HCT116 (cell line): ENCODE measurements at regions of chr3 and their contacts with region 1.

Region 1: GRCh38 chr3:146504498-146505197 is 35.3 kb upstream of the PLSCR2 start:
- DNase-seq: peak; percentile 33
- ATAC-seq: no peak
- H3K4me3 ChIP-seq: no peak overlapping the region
- H3K27ac ChIP-seq: peak overlapping the region; percentile 68; the same call in 1 of the 2 replicates
- H3K4me1 ChIP-seq: peaks cover 29 to 56% of the 10 kb centered on the region in 2 experiments
- H3K27me3 ChIP-seq: no peaks in the 10 kb centered on the region
- CTCF ChIP-seq: no peak
- POLR2A ChIP-seq: no peak
- RAD21 ChIP-seq: no peak

Region 2: DNA sequence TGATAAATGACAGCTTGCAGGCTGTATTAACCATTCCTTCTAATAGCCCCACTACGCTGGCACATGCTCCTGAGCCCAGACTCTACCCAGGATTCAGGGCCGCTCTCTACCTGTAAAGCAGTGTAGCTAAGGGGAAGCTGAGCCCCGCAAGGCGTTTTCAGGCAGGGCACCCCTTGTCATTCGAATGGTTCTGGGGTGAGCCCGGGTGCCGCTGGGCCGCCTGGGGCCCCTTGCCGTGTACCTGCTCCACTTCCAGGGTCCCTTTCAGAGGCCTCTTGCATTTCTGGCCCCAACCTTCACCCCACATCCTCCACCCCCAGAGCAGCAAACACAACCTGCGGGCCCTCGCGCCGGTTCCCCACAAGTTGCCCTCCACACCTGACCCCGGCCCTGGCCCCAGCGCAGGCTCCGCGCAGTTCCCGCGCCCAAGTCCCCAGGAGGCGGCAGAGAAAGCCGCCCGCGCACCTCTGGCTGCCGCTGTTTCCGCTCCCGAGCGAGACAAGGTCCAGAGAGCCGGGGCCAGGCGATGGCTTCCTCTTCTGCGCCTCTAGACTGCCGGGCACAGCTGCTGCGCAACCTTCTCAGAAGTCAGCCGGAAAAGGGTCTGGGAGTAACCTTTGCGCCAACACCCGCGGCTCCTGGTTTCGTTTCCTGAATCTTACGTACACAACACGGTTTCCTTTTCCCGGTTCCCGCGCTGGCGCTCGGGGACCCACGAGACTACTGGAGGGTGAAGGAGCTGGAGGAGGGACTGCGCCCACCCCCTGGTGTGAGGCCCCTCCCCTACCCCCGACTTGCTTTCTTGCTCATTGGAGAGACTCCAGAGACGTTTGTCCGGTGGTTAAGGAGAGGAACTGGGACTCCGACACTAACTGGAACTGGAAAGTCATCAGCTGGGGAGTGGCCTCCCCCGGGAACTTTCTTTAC is 39.6 kb after region 1 on chr3 and contains the start of gene PLSCR1:
- CTCF ChIA-PET with region 1: no interaction called
- POLR2A ChIA-PET with region 1: interaction called, 4 read pairs
- RAD21 ChIA-PET with region 1: no interaction called
- intact Hi-C with region 1: loop called (anchors 5 kb)
- DNase-seq: peak; percentile 93
- ATAC-seq: peak; percentile 93
- H3K4me3 ChIP-seq: peak within 1 kb of the TSS; percentile 79 to 84
- H3K27ac ChIP-seq: peak within 1 kb of the TSS; percentile 73
- H3K4me1 ChIP-seq: peaks cover 0 to 22% of the 10 kb centered on the region in 2 experiments; a peak in 2 of 4 replicates
- H3K27me3 ChIP-seq: no peaks in the 10 kb centered on the region
- CTCF ChIP-seq: no peak
- POLR2A ChIP-seq: peak; percentile 64
- RAD21 ChIP-seq: no peak
- total RNA-seq, gene PLSCR1: 44.2 TPM

Region 3: DNA sequence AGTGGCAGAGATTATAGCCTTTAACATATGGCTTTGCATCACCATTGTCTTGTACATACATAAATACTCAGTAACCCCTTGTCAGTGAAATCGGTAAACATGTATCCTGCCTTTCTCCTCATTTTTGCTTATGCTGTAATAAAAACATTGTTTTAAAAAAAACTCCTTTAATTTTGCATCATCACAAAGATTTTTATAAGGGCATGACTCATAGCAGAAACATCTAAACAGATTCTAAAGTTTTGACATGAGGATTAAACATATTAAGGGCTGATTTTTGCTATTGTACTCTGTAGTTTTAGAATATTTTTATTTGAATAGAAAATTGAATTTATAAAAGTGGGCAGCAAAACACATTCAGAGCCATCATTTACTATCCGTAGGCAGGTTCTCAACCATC is 625.8 kb after region 1 on chr3:
- CTCF ChIA-PET with region 1: no interaction called
- POLR2A ChIA-PET with region 1: no interaction called
- RAD21 ChIA-PET with region 1: no interaction called
- intact Hi-C with region 1: no loop called
- DNase-seq: no peak
- ATAC-seq: no peak
- H3K4me3 ChIP-seq: no peak overlapping the region
- H3K27ac ChIP-seq: no peak overlapping the region
- H3K4me1 ChIP-seq: no peaks in the 10 kb centered on the region
- H3K27me3 ChIP-seq: no peaks in the 10 kb centered on the region
- CTCF ChIP-seq: no peak
- POLR2A ChIP-seq: no peak
- RAD21 ChIP-seq: no peak